Calu3 (cell line): ENCODE measurements at regions of chr3 and their contacts with region 1.

Region 1: GRCh38 chr3:15007681-15008141 is 57.4 kb downstream of the MRPS25 start:
- DNase-seq: no peak
- H3K4me3 Mint-ChIP-seq: no peak overlapping the region
- H3K27ac Mint-ChIP-seq: no peak overlapping the region
- H3K4me1 Mint-ChIP-seq: no peaks in the 10 kb centered on the region
- H3K27me3 Mint-ChIP-seq: no peaks in the 10 kb centered on the region
- CTCF ChIP-seq: no peak

Region 2: DNA sequence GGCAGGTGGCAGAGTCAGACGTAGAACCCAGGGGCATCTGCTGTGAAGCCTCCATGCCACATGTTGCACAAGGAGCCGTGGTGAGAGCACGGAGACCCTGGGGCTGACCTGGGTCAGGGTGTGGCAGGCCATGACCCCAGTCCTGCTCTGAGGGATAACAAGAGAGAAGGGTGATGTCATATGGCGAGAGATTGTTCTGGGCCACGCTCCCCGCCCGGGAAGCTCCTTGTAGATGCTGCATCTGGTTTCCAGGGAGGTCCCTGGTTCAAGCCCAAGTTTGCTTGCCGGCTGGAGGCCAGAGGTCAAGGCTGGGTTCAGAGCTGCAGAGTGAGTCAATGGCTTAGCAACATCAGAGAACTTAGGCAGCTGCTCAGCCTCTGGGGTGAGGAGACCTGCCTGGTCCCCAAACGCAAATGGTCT is 171.7 kb before region 1 on chr3:
- CTCF ChIA-PET with region 1: interaction called, 11 read pairs
- intact Hi-C with region 1: no loop called
- DNase-seq: no peak
- H3K4me3 Mint-ChIP-seq: no peak overlapping the region
- H3K27ac Mint-ChIP-seq: no peak overlapping the region
- H3K4me1 Mint-ChIP-seq: no peaks in the 10 kb centered on the region
- H3K27me3 Mint-ChIP-seq: peaks cover 95% of the 10 kb centered on the region
- CTCF ChIP-seq: no peak